Mammary epithelial cell (primary cell): ENCODE measurements at regions of chr1 and their contacts with region 1.

Region 1: DNA sequence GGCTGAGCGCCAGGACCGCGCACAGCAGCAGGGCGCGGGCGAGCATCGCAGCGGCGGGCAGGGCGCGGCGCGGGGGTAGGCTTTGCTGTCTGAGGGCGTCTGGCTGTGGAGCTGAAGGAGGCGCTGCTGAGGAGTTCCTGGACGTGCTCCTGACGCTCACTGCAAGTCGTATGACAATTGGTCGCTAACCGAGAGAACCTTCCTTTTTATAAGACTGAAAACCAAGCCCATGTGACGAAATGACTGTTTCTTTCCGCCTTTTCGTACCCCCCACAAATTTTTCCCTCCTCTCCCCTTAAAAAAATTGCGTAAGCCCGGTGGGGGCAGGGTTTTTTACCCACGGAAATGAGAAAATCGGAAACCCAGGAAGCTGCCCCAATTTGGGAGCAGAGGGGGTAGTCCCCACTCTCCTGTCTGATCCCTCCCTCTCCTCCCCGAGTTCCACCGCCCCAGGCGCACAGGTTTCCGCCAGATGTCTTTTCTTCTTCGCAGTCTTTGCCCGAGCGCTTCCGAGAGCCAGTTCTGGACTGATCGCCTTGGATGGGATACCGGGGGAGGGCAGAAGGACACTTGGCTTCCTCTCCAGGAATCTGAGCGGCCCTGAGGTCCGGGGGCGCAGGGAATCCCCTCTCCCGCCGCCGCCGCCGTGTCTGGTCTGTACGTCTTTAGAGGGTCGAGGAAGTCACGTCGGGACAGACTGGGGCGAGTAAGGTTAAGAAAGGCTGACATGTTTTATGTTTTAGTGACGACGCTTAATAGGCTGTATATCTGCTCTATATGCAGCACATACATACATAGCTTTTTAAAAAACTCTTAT is at the start of gene PTGS2:
- DNase-seq: peak; percentile 97
- H3K4me3 ChIP-seq: peak within 1 kb of the TSS; percentile 84 to 99 (median 97)
- H3K27ac ChIP-seq: peak within 1 kb of the TSS; percentile 98
- H3K4me1 ChIP-seq: peaks cover 7% of the 10 kb centered on the region
- H3K27me3 ChIP-seq: no peaks in the 10 kb centered on the region
- CTCF ChIP-seq: peak; percentile 43 to 80
- total RNA-seq, gene PTGS2: 11.7 to 304 TPM

Region 2: DNA sequence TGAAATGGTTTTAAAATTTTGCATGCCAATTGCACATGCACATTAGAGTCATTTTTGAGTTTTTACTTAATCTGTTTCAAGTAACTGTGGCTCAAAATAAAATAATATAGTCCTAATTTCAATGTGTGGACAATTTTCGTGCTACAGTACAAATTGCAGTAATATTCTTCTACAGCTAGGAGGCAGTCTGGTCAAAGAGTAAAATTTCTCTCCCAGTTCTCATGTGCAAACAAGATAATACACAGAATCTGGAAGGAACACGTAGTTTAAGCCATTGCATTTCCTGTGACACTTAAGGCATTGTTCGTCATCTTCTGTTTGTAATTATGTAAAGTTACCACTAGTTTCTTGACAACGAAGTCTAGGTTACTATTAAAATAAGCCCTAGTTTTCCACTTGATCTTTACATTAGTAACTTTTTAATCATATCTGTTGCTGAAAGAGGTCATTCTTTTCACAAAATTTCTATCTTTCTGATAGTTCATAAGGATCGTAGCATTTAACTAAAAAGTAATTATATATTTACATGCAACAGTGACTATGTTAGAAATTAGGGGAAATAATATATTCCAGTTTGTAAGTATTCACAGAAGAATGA is 275.9 kb before region 1 on chr1:
- CTCF ChIA-PET with region 1: no interaction called
- dilution Hi-C with region 1: no loop called
- in situ Hi-C with region 1: no loop called
- intact Hi-C with region 1: loop called (anchors 10 kb)
- DNase-seq: peak; percentile 32
- H3K4me3 ChIP-seq: no peak overlapping the region
- H3K27ac ChIP-seq: no peak overlapping the region
- H3K4me1 ChIP-seq: no peaks in the 10 kb centered on the region
- H3K27me3 ChIP-seq: no peaks in the 10 kb centered on the region
- CTCF ChIP-seq: peak; percentile 62 to 83

Region 3: GRCh38 chr1:186559601-186560116 is 120.8 kb before region 1 on chr1:
- CTCF ChIA-PET with region 1: no interaction called
- dilution Hi-C with region 1: no loop called
- in situ Hi-C with region 1: no loop called
- intact Hi-C with region 1: loop called (anchors 1 kb)
- DNase-seq: peak; percentile 96
- H3K4me3 ChIP-seq: peak overlapping the region in 1 of 3 experiments; percentile 35
- H3K27ac ChIP-seq: peak overlapping the region; percentile 100
- H3K4me1 ChIP-seq: peaks cover 14% of the 10 kb centered on the region
- H3K27me3 ChIP-seq: no peaks in the 10 kb centered on the region
- CTCF ChIP-seq: no peak

Region 4: GRCh38 chr1:186722711-186723309 is 42.4 kb after region 1 on chr1:
- CTCF ChIA-PET with region 1: no interaction called
- dilution Hi-C with region 1: no loop called
- in situ Hi-C with region 1: no loop called
- intact Hi-C with region 1: loop called (anchors 2 kb)
- DNase-seq: peak; percentile 21
- H3K4me3 ChIP-seq: no peak overlapping the region
- H3K27ac ChIP-seq: no peak overlapping the region
- H3K4me1 ChIP-seq: no peaks in the 10 kb centered on the region
- H3K27me3 ChIP-seq: no peaks in the 10 kb centered on the region
- CTCF ChIP-seq: peak; percentile 75 to 86

Region 5: GRCh38 chr1:186738926-186739325 is 58.5 kb after region 1 on chr1:
- CTCF ChIA-PET with region 1: no interaction called
- dilution Hi-C with region 1: no loop called
- in situ Hi-C with region 1: no loop called
- intact Hi-C with region 1: no loop called
- DNase-seq: no peak
- H3K4me3 ChIP-seq: no peak overlapping the region
- H3K27ac ChIP-seq: peak overlapping the region; percentile 7
- H3K4me1 ChIP-seq: peaks cover 34% of the 10 kb centered on the region
- H3K27me3 ChIP-seq: no peaks in the 10 kb centered on the region
- CTCF ChIP-seq: no peak

Region 6: DNA sequence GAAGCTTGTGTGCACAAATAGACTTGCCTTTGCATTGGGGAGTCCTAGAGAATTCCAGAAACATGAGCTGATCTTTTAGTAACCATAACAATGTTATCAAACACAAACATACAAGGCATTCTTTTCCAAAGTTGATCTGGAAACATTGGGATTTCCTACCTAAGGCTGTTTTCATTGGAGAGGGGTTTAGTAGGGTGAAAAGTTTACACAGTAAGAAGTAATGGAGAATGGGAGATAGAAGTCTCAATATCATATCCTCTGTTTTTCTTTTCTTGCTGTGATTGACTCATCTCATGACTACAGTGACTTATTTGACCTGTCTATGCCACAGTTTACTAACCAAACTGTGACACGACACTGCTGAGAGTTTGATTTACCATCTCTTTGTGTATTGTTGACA is 82.7 kb after region 1 on chr1:
- CTCF ChIA-PET with region 1: no interaction called
- dilution Hi-C with region 1: no loop called
- in situ Hi-C with region 1: no loop called
- intact Hi-C with region 1: loop called (anchors 1 kb)
- DNase-seq: peak; percentile 54
- H3K4me3 ChIP-seq: no peak overlapping the region
- H3K27ac ChIP-seq: no peak overlapping the region
- H3K4me1 ChIP-seq: no peaks in the 10 kb centered on the region
- H3K27me3 ChIP-seq: no peaks in the 10 kb centered on the region
- CTCF ChIP-seq: no peak

Region 7: DNA sequence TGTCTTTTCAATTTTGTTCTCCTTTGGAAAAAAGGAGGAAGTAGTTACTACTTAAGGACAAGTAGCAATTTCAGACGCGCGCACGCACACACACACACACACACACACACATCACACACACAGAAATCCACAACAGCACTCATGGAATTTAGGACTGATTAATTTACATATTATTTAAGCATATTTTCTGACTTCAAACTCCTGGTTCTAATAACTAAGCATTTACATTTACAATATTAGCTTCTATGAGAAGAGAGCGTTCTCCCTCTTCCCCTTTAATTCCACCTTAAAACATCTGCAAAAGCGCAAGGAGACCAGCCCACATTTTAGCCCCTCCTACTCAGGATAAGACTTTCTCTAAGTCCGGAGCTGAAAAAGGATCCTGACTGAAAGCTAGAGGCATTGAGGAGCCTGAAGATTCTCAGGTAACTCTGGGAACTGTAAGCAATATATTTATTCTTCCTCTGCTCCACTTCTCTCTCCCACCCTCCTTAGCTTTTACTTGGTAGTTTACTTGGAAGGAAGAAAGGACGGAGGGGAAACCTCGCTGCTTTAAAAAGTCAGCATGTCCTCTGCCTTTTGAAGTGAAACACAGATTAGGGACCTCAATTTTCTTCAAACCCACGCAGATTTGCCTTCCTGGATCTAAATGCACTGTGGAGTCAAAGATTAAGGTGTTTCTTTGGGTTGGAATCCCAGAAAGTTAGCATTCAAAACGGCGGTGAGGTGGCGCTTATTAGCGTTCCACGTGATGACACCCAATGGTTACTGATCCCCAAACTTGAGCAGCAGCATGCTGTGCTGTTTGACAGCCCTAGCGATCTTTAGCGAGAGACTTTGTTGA is 148.4 kb after region 1 on chr1 and contains the start of gene PLA2G4A:
- CTCF ChIA-PET with region 1: no interaction called
- dilution Hi-C with region 1: no loop called
- in situ Hi-C with region 1: no loop called
- intact Hi-C with region 1: loop called (anchors 2 kb)
- DNase-seq: peak; percentile 78
- H3K4me3 ChIP-seq: peak within 1 kb of the TSS; percentile 52 to 99 (median 99)
- H3K27ac ChIP-seq: peak within 1 kb of the TSS; percentile 77
- H3K4me1 ChIP-seq: no peaks in the 10 kb centered on the region
- H3K27me3 ChIP-seq: no peaks in the 10 kb centered on the region
- CTCF ChIP-seq: no peak
- total RNA-seq, gene PLA2G4A: 7.3 to 7.8 TPM

Region 8: DNA sequence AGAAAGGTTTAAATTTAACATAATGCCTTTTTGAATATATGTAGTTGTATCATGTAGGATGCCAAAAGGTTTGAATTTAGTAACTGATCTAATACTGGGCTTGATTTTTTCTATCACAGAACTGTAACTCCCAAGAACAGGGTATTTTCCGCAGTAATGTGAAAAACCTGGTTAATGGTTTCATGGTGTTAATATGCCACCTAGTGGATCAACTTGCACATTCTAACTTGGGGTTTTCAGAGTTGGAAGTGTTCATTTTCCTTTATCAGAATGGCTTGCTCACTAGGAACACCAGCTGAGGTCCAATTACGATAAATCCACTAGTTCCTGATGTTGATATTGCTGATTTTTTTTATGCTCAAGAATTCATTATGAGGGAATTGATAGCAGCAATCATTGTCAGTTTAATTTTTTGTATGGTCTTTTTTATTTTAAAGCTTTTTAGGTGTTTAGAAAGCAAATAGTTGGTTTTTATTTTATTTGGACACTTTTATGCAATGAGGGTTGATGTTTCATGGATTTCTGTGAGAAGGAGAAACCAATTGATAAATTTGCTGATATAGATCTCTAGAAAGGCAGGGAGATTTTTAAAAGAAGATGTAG is 305.5 kb after region 1 on chr1:
- CTCF ChIA-PET with region 1: no interaction called
- dilution Hi-C with region 1: no loop called
- in situ Hi-C with region 1: no loop called
- intact Hi-C with region 1: loop called (anchors 2 kb)
- DNase-seq: peak; percentile 40
- H3K4me3 ChIP-seq: no peak overlapping the region
- H3K27ac ChIP-seq: no peak overlapping the region
- H3K4me1 ChIP-seq: no peaks in the 10 kb centered on the region
- H3K27me3 ChIP-seq: no peaks in the 10 kb centered on the region
- CTCF ChIP-seq: peak; percentile 56 to 73